HCT116 (cell line): ENCODE measurements at regions of chr17 and their contacts with region 1.

Region 1: GRCh38 chr17:4420692-4421131 is 13.0 kb upstream of the SPNS3 start:
- DNase-seq: peak; percentile 71
- ATAC-seq: peak; percentile 96
- H3K4me3 ChIP-seq: no peak overlapping the region
- H3K27ac ChIP-seq: no peak overlapping the region
- H3K4me1 ChIP-seq: peaks cover 3 to 6% of the 10 kb centered on the region in 2 experiments; a peak in 2 of 4 replicates
- H3K27me3 ChIP-seq: no peaks in the 10 kb centered on the region
- CTCF ChIP-seq: peak; percentile 83 to 87 (median 85)
- POLR2A ChIP-seq: no peak
- RAD21 ChIP-seq: peak; percentile 95

Region 2: DNA sequence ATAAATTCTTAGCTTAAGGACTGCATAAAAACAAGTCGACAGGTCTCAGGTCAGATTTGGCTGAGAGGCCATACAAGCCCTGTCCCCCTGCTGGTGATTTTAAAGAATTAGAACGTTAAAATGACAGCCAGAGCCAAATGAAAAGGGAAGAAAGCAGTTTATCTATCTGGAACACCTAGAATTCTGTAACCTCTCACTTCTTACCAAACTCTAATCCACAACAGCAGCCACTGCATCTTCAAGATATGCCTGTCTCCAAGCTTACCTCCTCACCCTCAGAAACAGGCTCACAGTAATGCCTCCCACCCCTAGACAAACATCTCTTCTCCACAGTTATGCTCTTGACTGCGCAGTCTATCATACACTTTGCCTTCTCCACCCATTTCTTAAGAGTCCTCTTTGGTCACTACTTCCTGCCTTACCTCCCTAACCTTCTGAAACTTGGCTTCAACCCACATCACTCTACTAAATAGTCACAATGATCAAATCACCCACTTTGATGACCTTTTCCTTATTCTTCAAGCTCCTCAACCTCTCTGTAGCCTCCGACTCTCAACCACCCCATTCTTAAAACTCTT is 171.2 kb before region 1 on chr17:
- CTCF ChIA-PET with region 1: no interaction called
- POLR2A ChIA-PET with region 1: no interaction called
- RAD21 ChIA-PET with region 1: no interaction called
- intact Hi-C with region 1: no loop called
- DNase-seq: no peak
- ATAC-seq: peak; percentile 61
- H3K4me3 ChIP-seq: no peak overlapping the region
- H3K27ac ChIP-seq: no peak overlapping the region
- H3K4me1 ChIP-seq: peaks cover 20 to 27% of the 10 kb centered on the region in 2 experiments
- H3K27me3 ChIP-seq: no peaks in the 10 kb centered on the region
- CTCF ChIP-seq: peak in 2 of 3 experiments; percentile 54 to 68; a peak in 4 of 6 replicates
- POLR2A ChIP-seq: no peak
- RAD21 ChIP-seq: no peak; the same call in 1 of the 2 replicates

Region 3: GRCh38 chr17:4534026-4534914 is 113.6 kb after region 1 on chr17:
- CTCF ChIA-PET with region 1: interaction called, 3 read pairs
- POLR2A ChIA-PET with region 1: no interaction called
- RAD21 ChIA-PET with region 1: interaction called in 1 of 2 experiments, 3 read pairs
- intact Hi-C with region 1: loop called (anchors 5 kb)
- DNase-seq: no peak
- ATAC-seq: peak; percentile 46
- H3K4me3 ChIP-seq: no peak overlapping the region
- H3K27ac ChIP-seq: peak overlapping the region; percentile 6
- H3K4me1 ChIP-seq: peaks cover 8 to 19% of the 10 kb centered on the region in 2 experiments; a peak in 3 of 4 replicates
- H3K27me3 ChIP-seq: no peaks in the 10 kb centered on the region
- CTCF ChIP-seq: no peak
- POLR2A ChIP-seq: peak; percentile 27
- RAD21 ChIP-seq: no peak

Region 4: DNA sequence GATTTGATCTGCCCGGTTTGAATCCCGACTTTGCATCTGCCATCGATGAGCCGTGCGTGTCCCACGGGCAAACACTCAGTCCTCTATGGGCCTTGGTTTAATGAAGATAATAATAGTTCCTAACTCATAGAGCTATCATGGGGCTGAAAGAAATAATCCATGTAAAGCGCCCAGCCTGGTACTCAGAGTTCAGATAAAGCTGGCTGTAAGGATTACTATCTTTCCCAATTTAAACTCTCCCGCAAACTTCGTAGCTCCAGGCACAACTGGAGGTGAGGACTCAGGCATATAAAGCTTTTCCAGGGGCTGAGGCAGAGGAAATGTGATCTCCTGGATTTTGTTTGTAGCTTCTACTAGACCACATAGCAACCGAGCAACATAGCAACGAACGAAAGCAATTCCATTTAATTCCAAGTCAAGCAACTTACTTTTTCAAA is 204.5 kb after region 1 on chr17:
- CTCF ChIA-PET with region 1: interaction called, 5 read pairs
- POLR2A ChIA-PET with region 1: no interaction called
- RAD21 ChIA-PET with region 1: no interaction called
- intact Hi-C with region 1: loop called (anchors 1 kb)
- DNase-seq: no peak
- ATAC-seq: no peak
- H3K4me3 ChIP-seq: no peak overlapping the region
- H3K27ac ChIP-seq: no peak overlapping the region
- H3K4me1 ChIP-seq: peaks cover 0 to 4% of the 10 kb centered on the region in 2 experiments; a peak in 1 of 4 replicates
- H3K27me3 ChIP-seq: no peaks in the 10 kb centered on the region
- CTCF ChIP-seq: no peak
- POLR2A ChIP-seq: no peak
- RAD21 ChIP-seq: no peak

Region 5: DNA sequence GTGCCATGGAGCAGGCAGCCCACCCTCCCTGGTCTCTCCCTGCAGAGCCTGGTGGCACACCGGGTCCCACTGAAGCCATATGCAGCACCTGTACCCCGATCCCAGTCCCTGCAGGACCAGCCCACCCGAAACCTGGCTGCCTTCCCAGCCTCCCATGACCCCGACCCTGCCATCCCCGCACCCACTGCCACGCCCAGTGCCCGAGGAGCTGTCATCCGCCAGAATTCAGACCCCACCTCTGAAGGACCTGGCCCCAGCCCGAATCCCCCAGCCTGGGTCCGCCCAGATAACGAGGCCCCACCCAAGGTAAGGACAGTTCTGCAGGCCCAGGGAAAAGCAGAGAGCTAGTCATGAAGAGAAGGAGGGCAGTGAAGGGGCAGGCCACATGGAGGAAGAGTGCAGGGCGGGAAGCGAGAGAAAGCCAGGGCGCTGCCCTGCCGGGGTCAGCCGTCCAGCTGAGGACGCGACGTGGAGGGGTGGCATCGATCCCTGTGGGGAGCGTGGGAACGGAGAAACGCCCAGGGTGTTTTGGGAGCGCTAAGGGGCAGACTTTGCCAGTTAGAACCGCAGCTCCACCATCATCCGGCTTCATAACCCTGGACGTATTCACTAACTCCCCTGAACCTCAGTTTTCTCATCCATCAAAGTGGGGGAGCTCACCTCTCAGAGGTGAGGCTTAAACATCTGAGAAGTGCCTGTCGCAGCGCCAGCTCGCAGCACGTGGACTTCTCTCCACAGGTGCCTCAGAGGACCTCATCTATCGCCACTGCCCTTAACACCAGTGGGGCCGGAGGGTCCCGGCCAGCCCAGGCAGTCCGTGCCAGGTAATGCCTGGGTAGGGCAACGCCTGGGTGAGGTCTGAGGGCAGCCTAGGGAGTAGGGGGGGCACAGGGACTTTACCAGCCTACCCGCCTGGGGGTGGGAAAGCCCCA is 471.0 kb after region 1 on chr17:
- CTCF ChIA-PET with region 1: interaction called, 3 read pairs
- POLR2A ChIA-PET with region 1: no interaction called
- RAD21 ChIA-PET with region 1: no interaction called
- intact Hi-C with region 1: loop called (anchors 2 kb)
- DNase-seq: no peak
- ATAC-seq: no peak
- H3K4me3 ChIP-seq: no peak overlapping the region
- H3K27ac ChIP-seq: no peak overlapping the region
- H3K4me1 ChIP-seq: no peaks in the 10 kb centered on the region
- H3K27me3 ChIP-seq: no peaks in the 10 kb centered on the region
- CTCF ChIP-seq: no peak
- POLR2A ChIP-seq: no peak
- RAD21 ChIP-seq: no peak